ENCODE measurements at regions of chr1 and their contacts with region 1.

Region 1: DNA sequence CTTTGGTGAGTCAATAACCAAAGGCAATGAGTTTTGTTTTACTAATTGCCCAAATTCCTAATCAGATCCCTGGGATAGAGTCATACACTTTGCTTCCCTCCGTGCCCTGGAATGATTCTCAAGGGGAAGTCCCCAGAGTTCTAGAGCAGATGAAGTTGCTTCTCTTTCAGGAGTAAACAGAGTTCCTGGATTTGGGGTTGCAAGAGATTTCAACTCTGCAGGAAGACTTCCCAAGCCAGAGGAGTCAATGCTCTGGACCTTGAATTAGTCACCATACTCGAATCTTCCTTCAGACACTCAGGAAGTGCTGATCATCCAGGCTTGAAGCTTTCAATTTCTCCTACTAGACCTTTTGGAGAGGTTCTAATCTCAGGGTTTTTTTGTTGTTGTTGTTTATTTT is 39.6 kb downstream of the FCER1A start:
- DNase-seq: no peak
- ATAC-seq: no peak
- H3K4me3 ChIP-seq: no peak overlapping the region
- H3K27ac ChIP-seq: no peak overlapping the region
- H3K4me1 ChIP-seq: no peaks in the 10 kb centered on the region
- H3K27me3 ChIP-seq: no peaks in the 10 kb centered on the region
- CTCF ChIP-seq: no peak
- EP300 ChIP-seq: no peak
- POLR2A ChIP-seq: no peak
- RAD21 ChIP-seq: no peak

Region 2: GRCh38 chr1:159197561-159198557 is 143.9 kb before region 1 on chr1:
- CTCF ChIA-PET with region 1: no interaction called
- POLR2A ChIA-PET with region 1: no interaction called
- RAD21 ChIA-PET with region 1: no interaction called
- SMC1A ChIA-PET with region 1: no interaction called
- in situ Hi-C with region 1: no loop called
- intact Hi-C with region 1: no loop called
- DNase-seq: no peak
- ATAC-seq: peak; percentile 96
- H3K4me3 ChIP-seq: no peak overlapping the region
- H3K27ac ChIP-seq: no peak overlapping the region
- H3K4me1 ChIP-seq: no peaks in the 10 kb centered on the region
- H3K27me3 ChIP-seq: peaks cover 0 to 2% of the 10 kb centered on the region in 2 experiments; a peak in 2 of 4 replicates
- CTCF ChIP-seq: peak; percentile 83 to 90 (median 88)
- EP300 ChIP-seq: no peak
- POLR2A ChIP-seq: no peak
- RAD21 ChIP-seq: peak; percentile 65

Region 3: GRCh38 chr1:159282118-159282517 is 59.6 kb before region 1 on chr1:
- CTCF ChIA-PET with region 1: no interaction called
- POLR2A ChIA-PET with region 1: no interaction called
- RAD21 ChIA-PET with region 1: no interaction called
- SMC1A ChIA-PET with region 1: no interaction called
- in situ Hi-C with region 1: no loop called
- intact Hi-C with region 1: loop called (anchors 10 kb)
- DNase-seq: no peak
- ATAC-seq: no peak
- H3K4me3 ChIP-seq: no peak overlapping the region
- H3K27ac ChIP-seq: no peak overlapping the region
- H3K4me1 ChIP-seq: no peaks in the 10 kb centered on the region
- H3K27me3 ChIP-seq: peaks cover 0 to 3% of the 10 kb centered on the region in 2 experiments; a peak in 1 of 4 replicates
- CTCF ChIP-seq: no peak
- EP300 ChIP-seq: no peak
- POLR2A ChIP-seq: no peak
- RAD21 ChIP-seq: no peak

Measured in GM12878 (cell line).